MCF 10A (cell line): ENCODE measurements at regions of chr17 and their contacts with region 1.

Region 1: DNA sequence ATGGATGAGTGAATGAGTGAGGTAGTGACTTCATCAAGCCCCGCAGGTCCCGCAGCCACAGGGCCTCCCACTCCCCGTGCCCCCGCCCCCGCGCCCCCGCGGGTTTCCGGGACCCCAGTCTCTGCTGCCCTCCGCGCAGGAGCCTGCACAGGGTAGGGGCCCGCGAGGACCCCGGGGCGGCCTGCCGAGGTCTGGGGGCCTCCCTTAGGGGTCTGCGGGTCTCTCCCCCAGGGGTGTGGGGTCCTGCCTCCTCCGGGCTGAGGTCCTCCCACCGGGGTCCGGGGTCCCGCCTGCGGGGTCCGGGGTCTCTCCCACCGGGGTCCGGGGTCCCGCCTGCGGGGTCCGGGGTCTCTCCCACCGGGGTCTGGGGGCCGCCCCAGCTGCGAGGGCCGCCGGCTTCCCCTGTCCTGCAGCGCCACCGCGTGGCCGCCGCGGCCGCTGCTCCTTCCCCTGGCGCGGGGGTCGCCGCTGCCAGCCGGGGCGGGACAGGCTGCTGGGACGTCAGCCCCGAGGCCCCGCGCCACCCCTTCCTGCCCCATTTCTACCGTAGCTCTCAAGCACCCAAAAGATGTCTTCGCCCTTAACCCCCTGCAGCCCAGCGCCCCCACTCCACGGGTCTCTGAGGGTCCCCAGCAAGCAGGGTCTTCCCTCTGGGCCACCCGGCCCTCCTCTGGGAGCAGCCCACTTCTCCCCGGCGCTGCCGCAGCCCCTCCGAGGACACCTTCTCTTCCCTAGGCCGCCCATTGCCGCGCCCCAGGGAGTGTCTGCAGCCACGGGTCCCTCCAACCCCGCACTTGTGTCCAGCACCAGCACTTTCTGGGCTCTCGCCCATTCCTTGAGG is 10.4 kb upstream of the CHMP6 start:
- DNase-seq: no peak
- H3K4me3 Mint-ChIP-seq: no peak overlapping the region
- H3K27ac Mint-ChIP-seq: no peak overlapping the region
- H3K4me1 Mint-ChIP-seq: peaks cover 11% of the 10 kb centered on the region
- H3K27me3 Mint-ChIP-seq: peaks cover 16% of the 10 kb centered on the region
- CTCF ChIP-seq: peak; percentile 95

Region 2: DNA sequence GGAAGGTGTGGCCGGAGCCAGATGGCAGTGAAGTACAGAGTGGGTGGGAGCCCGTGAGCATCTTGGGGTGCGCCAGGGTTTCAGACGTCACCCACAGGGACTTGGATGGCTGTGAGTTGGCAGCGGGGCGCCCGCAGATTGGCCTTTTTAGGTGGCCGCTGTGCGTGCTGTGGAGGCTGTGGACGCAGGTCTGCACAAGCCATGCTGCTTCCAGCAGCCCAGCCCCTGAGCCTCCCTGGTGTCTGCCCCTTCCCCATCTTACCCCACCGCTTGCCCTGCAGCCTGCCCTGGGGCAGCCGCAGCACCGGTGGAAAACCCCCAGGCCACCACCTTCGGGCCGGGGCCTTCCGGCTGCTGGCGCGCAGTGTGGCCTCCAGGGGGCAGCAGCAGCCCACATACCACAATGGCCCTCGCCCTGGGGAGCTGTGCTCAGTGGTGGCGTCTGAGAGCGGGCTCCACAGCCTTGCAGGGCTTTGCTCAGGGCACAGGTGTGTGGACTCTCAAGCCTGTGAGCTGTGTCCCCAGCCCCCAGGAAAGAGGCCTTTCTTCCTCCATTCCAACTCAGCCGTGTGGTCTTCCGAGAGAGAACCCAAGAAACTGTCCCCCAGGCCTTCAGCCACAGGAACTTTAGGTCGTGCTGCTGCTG is 554.5 kb before region 1 on chr17:
- CTCF ChIA-PET with region 1: interaction called, 3 read pairs
- POLR2A ChIA-PET with region 1: interaction called, 3 read pairs
- intact Hi-C with region 1: loop called (anchors 5 kb)
- DNase-seq: peak; percentile 66
- H3K4me3 Mint-ChIP-seq: no peak overlapping the region
- H3K27ac Mint-ChIP-seq: no peak overlapping the region
- H3K4me1 Mint-ChIP-seq: no peaks in the 10 kb centered on the region
- H3K27me3 Mint-ChIP-seq: no peaks in the 10 kb centered on the region
- CTCF ChIP-seq: peak; percentile 96

Region 3: DNA sequence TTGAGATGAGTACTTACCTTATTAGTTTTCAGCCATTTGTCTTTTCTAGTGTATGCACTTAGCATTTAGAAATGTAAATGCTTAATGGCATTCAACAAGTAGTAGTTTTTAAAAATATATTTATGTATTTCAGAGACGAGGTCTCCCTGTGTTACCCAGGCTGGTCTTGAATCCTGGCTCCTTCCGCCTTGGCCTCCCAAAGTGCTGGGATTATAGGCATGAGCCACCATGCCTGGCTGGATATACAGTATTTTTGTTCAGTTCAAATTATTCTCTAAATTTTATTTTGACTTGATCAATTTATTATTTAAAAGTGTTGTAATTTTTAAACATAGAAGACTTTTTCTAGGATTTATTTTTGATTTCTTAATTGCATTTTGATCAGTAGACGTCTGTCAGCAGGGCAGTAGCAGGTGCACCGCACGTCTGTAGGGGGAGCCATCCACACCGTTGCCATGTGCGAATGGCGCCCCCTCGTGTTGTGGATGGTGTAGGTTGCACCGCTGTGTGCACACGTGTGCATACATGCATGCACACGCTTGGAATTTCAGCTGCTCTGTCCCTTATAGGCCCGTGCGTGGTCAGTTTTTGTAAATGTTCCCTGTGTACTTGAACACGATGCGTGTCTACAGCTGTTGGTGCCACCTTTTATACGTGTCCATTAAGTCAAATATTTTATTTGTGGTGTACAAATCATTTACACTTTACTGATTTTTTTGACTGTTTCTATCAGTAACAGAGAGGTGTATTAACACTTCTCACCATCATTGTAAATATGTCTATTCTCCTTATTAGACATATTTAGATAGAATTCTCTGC is 406.0 kb before region 1 on chr17:
- CTCF ChIA-PET with region 1: no interaction called
- POLR2A ChIA-PET with region 1: no interaction called
- intact Hi-C with region 1: loop called (anchors 2 kb)
- DNase-seq: peak; percentile 90
- H3K4me3 Mint-ChIP-seq: no peak overlapping the region
- H3K27ac Mint-ChIP-seq: no peak overlapping the region
- H3K4me1 Mint-ChIP-seq: no peaks in the 10 kb centered on the region
- H3K27me3 Mint-ChIP-seq: no peaks in the 10 kb centered on the region
- CTCF ChIP-seq: peak; percentile 100

Region 4: DNA sequence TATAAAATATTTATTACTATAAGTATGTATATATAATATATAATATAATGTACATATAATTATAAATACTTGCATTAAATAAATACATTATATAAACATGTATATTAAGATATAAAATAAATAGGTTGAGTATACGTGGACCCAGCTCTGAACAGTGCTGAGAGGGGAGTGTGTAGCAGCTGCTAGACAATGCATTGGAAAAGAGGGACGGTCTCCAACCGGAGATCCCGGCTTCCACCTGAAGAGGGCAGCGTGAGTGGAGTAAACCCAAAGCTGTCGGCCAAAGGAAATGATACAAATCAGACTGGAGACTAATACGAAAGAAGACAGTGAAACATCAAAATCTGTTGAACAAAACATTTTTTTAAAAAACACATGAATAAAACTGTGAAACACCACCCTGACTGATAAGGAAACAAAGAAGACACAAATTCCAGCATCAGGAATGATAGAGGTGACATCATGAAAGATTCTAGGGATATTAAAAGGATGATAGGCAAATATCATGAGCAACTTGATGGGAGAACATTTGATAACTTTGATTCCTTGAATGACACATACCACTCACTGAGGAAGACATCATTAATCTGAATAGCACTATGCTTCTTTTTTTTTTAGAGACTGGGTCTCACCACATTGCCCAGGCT is 115.0 kb before region 1 on chr17:
- CTCF ChIA-PET with region 1: interaction called, 3 read pairs
- POLR2A ChIA-PET with region 1: no interaction called
- intact Hi-C with region 1: loop called (anchors 1 kb)
- DNase-seq: peak; percentile 76
- H3K4me3 Mint-ChIP-seq: no peak overlapping the region
- H3K27ac Mint-ChIP-seq: no peak overlapping the region
- H3K4me1 Mint-ChIP-seq: peaks cover 6% of the 10 kb centered on the region
- H3K27me3 Mint-ChIP-seq: no peaks in the 10 kb centered on the region
- CTCF ChIP-seq: peak; percentile 54

Region 5: DNA sequence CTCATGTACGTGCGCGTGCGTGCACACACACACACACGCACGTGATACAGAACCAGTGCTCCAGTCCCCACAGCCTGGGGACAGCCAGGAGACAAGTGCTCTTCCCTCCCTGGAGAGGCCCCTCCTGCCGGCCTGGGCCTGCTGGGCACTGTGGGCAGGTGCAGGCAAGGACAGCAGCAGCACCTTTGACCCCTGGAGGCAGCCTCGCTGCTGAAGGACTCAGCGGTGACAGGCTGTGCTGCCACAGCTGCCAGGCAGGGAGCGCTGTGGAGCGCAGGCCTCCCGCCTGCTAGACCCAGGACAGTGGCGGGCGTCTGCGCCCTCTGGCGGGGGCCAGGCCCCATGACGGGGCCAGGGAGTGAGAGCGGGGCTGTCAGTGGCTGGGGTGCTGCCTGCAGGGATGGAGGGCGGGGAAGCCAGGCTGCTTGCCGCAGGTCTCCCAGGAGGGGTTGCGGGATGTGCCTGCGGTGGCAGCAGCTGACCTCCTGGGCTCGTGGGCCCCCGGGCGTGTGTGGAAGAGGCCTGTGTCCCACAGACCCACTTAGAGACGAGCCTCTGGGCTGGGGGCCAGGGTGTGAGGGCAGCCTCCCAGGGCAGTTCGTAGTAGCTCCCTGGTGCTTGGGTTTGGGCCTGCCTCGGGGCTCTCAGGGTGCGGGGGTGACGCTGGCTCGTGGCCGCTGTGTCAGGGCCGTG is 120.5 kb after region 1 on chr17:
- CTCF ChIA-PET with region 1: interaction called, 6 read pairs
- POLR2A ChIA-PET with region 1: no interaction called
- intact Hi-C with region 1: loop called (anchors 10 kb)
- DNase-seq: peak; percentile 73
- H3K4me3 Mint-ChIP-seq: no peak overlapping the region
- H3K27ac Mint-ChIP-seq: no peak overlapping the region
- H3K4me1 Mint-ChIP-seq: peaks cover 10% of the 10 kb centered on the region
- H3K27me3 Mint-ChIP-seq: no peaks in the 10 kb centered on the region
- CTCF ChIP-seq: peak; percentile 100